HepG2 (cell line): ENCODE measurements at regions of chr22 and their contacts with region 1.

Region 1: DNA sequence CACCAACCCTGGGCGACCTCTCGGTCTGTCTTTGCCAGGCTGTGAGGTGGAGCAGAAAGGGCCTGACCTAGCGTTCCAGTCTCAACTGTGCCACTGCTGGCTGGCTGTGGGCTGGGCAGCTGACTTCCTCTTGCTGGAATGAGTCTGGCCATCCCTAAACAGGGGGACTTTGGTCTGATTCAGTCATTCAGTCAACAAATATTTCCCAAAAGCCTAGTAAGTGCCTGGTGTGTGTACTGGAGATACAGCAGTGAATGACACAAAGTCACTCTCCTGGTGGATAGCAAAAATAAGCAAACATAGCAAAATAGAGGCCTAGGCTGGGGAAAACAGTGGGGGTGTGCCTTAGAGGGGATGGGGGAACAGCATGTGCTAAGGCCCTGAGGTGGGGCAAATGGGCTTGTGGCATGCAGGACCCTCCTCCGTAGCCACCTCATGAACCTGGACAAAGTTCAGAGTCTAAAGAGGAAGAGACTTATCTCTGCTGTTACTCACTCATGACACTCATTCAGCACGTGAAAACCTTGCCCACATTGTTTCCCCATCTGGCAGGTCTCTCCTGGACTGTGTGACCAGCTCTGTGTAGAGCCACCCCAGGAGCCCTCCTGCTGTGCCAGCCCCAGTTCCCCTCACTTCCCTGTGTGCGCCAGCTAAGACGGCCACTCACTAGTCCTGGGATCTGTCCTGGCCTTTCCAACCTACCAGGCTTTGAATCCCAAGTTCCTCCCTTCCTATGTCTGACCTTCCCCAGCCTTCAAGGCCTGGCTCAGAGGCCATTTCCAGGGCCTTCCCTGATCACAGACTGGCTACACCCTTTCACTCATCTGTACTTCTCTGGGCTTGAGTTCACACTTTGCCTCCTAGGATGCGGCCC is 4.7 kb downstream of the GUCD1 start:
- DNase-seq: peak; percentile 99
- ATAC-seq: peak; percentile 84
- H3K4me3 ChIP-seq: peak overlapping the region in 1 of 3 experiments; percentile 51; a peak in 2 of 6 replicates
- H3K27ac ChIP-seq: peak overlapping the region; percentile 98
- H3K4me1 ChIP-seq: peaks cover 75% of the 10 kb centered on the region
- H3K27me3 ChIP-seq: no peaks in the 10 kb centered on the region; a peak in 1 of 5 replicates
- CTCF ChIP-seq: 0 out of 2 replicates have a peak, but pooled peaks have one; percentile 2
- EP300 ChIP-seq: peak; percentile 82 to 91
- POLR2A ChIP-seq: peak; percentile 57 to 79
- RAD21 ChIP-seq: no peak

Region 2: GRCh38 chr22:24486501-24486921 is 63.8 kb before region 1 on chr22:
- CTCF ChIA-PET with region 1: no interaction called
- POLR2A ChIA-PET with region 1: no interaction called
- in situ Hi-C with region 1: no loop called
- intact Hi-C with region 1: no loop called
- DNase-seq: peak; percentile 44
- ATAC-seq: peak; percentile 83
- H3K4me3 ChIP-seq: no peak overlapping the region
- H3K27ac ChIP-seq: no peak overlapping the region
- H3K4me1 ChIP-seq: peaks cover 59% of the 10 kb centered on the region
- H3K27me3 ChIP-seq: no peaks in the 10 kb centered on the region
- CTCF ChIP-seq: no peak
- EP300 ChIP-seq: no peak
- POLR2A ChIP-seq: no peak
- RAD21 ChIP-seq: no peak

Region 3: GRCh38 chr22:24525416-24526037 is 24.7 kb before region 1 on chr22:
- CTCF ChIA-PET with region 1: interaction called, 6 read pairs
- POLR2A ChIA-PET with region 1: interaction called, 26 read pairs
- in situ Hi-C with region 1: no loop called
- intact Hi-C with region 1: no loop called
- DNase-seq: peak; percentile 92
- ATAC-seq: peak; percentile 88
- H3K4me3 ChIP-seq: no peak overlapping the region
- H3K27ac ChIP-seq: no peak overlapping the region
- H3K4me1 ChIP-seq: peaks cover 54% of the 10 kb centered on the region
- H3K27me3 ChIP-seq: no peaks in the 10 kb centered on the region
- CTCF ChIP-seq: peak; percentile 99
- EP300 ChIP-seq: peak in 1 of 2 experiments; percentile 64; a peak in 1 of 4 replicates
- POLR2A ChIP-seq: no peak
- RAD21 ChIP-seq: peak; percentile 96

Region 4: GRCh38 chr22:24564376-24565058 is 14.3 kb after region 1 on chr22:
- CTCF ChIA-PET with region 1: no interaction called
- POLR2A ChIA-PET with region 1: interaction called, 75 read pairs
- in situ Hi-C with region 1: no loop called
- intact Hi-C with region 1: no loop called
- DNase-seq: peak; percentile 70
- ATAC-seq: peak; percentile 92
- H3K4me3 ChIP-seq: peak overlapping the region in 1 of 3 experiments; percentile 32; a peak in 1 of 6 replicates
- H3K27ac ChIP-seq: peak overlapping the region; percentile 74
- H3K4me1 ChIP-seq: peaks cover 85% of the 10 kb centered on the region
- H3K27me3 ChIP-seq: no peaks in the 10 kb centered on the region
- CTCF ChIP-seq: no peak
- EP300 ChIP-seq: peak in 1 of 2 experiments; percentile 29; a peak in 1 of 4 replicates
- POLR2A ChIP-seq: no peak
- RAD21 ChIP-seq: no peak

Region 5: GRCh38 chr22:24571266-24571665 is 21.0 kb after region 1 on chr22:
- CTCF ChIA-PET with region 1: no interaction called
- POLR2A ChIA-PET with region 1: interaction called, 138 read pairs
- in situ Hi-C with region 1: no loop called
- intact Hi-C with region 1: no loop called
- DNase-seq: no peak
- ATAC-seq: peak; percentile 21; the same call in 2 of the 3 replicates
- H3K4me3 ChIP-seq: no peak overlapping the region
- H3K27ac ChIP-seq: peak overlapping the region; percentile 78
- H3K4me1 ChIP-seq: peaks cover 64% of the 10 kb centered on the region
- H3K27me3 ChIP-seq: no peaks in the 10 kb centered on the region
- CTCF ChIP-seq: no peak
- EP300 ChIP-seq: no peak
- POLR2A ChIP-seq: no peak
- RAD21 ChIP-seq: no peak

Region 6: DNA sequence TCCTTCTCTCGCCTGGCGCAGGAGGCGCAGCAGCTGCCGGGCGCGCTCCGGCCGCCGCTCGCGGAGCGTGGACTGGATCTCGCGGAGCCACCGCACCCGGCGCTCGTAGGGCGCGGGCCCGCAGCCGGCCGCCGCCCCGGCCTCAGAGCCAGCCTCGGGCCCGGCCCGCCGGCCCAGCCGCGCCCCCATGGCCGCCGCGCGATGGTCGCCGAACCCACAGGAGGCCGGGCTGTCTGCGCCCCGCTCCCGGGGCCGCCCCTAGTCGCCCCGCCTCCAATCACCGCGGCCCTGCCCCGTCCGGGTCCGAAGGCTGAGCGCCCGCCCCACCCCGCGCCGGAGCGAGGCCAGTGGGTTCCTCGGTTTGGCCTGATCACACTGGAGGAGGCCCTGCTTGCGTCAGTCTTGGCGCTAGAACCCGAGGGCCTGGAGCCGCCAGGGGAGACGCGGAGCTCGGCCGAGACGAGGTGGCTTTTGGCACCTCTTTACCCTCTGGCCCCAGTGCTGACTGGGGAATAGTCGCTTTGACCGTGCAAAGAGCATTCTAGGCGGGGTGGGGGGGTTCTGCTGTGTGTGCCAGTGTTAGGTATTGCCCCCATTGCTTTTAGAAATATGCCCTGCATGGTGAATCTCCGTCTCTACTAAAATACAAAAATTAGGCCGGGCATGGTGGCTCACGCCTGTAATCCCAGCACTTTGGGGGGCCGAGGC is 42.7 kb after region 1 on chr22 and contains the start of gene LRRC75B:
- CTCF ChIA-PET with region 1: no interaction called
- POLR2A ChIA-PET with region 1: interaction called, 69 read pairs
- in situ Hi-C with region 1: loop called (anchors 5 kb)
- intact Hi-C with region 1: loop called (anchors 1 kb)
- DNase-seq: peak; percentile 85
- ATAC-seq: peak; percentile 89
- H3K4me3 ChIP-seq: peak within 1 kb of the TSS; percentile 79 to 88 (median 84)
- H3K27ac ChIP-seq: peak within 1 kb of the TSS; percentile 97
- H3K4me1 ChIP-seq: peaks cover 74% of the 10 kb centered on the region
- H3K27me3 ChIP-seq: no peaks in the 10 kb centered on the region; a peak in 1 of 5 replicates
- CTCF ChIP-seq: peak; percentile 19
- EP300 ChIP-seq: peak; percentile 19 to 31; a peak in 1 of 4 replicates
- POLR2A ChIP-seq: peak; percentile 86 to 94
- RAD21 ChIP-seq: peak; percentile 49
- total RNA-seq, gene LRRC75B: 5.7 and 11.8 TPM in 2 replicates

Region 7: GRCh38 chr22:24601217-24602104 is 51.2 kb after region 1 on chr22:
- CTCF ChIA-PET with region 1: no interaction called
- POLR2A ChIA-PET with region 1: interaction called, 25 read pairs
- in situ Hi-C with region 1: no loop called
- intact Hi-C with region 1: loop called (anchors 2 kb)
- DNase-seq: peak; percentile 66
- ATAC-seq: peak; percentile 61
- H3K4me3 ChIP-seq: peak overlapping the region in 2 of 3 experiments; percentile 68 to 80; a peak in 4 of 6 replicates
- H3K27ac ChIP-seq: peak overlapping the region; percentile 82
- H3K4me1 ChIP-seq: peaks cover 40% of the 10 kb centered on the region
- H3K27me3 ChIP-seq: no peaks in the 10 kb centered on the region
- CTCF ChIP-seq: no peak
- EP300 ChIP-seq: no peak
- POLR2A ChIP-seq: peak in 1 of 2 experiments; percentile 71; a peak in 3 of 4 replicates
- RAD21 ChIP-seq: no peak